ENCODE measurements at regions of chr10 and their contacts with region 1.

Region 1: GRCh38 chr10:27241652-27242472 is 1.3 kb upstream of the ACBD5 start:
- DNase-seq: peak; percentile 95 to 97
- ATAC-seq: peak; percentile 96
- H3K4me3 ChIP-seq: peak overlapping the region; percentile 58 to 86
- H3K27ac ChIP-seq: peak overlapping the region; percentile 85 to 91
- H3K4me1 ChIP-seq: no peaks in the 10 kb centered on the region
- H3K27me3 ChIP-seq: no peaks in the 10 kb centered on the region

Region 2: GRCh38 chr10:27153845-27154193 is 88.0 kb before region 1 on chr10:
- intact Hi-C with region 1: loop called in 1 of 2 experiments (anchors 1 kb)
- DNase-seq: no peak
- ATAC-seq: no peak
- H3K4me3 ChIP-seq: peak overlapping the region; percentile 87 to 95
- H3K27ac ChIP-seq: peak overlapping the region; percentile 48 to 59
- H3K4me1 ChIP-seq: peaks cover 0 to 6% of the 10 kb centered on the region in 2 donors
- H3K27me3 ChIP-seq: no peaks in the 10 kb centered on the region

Region 3: GRCh38 chr10:27504007-27504807 is 262.3 kb after region 1 on chr10 and contains the start of gene RAB18:
- intact Hi-C with region 1: loop called in 1 of 2 experiments (anchors 10 kb)
- DNase-seq: peak; percentile 99
- ATAC-seq: peak; percentile 99
- H3K4me3 ChIP-seq: peak within 1 kb of the TSS; percentile 52 to 84
- H3K27ac ChIP-seq: peak within 1 kb of the TSS; percentile 5 to 83
- H3K4me1 ChIP-seq: peaks cover 0 to 3% of the 10 kb centered on the region in 2 donors
- H3K27me3 ChIP-seq: no peaks in the 10 kb centered on the region
- total RNA-seq, gene RAB18: 103 to 105 TPM

Measured in aorta (tissue), 5 donors.